ENCODE measurements at regions of chr10 and their contacts with region 1.

Region 1: GRCh38 chr10:101569838-101570766 is 18.0 kb downstream of the POLL start:
- DNase-seq: peak; percentile 61
- H3K4me3 ChIP-seq: peak overlapping the region; percentile 56 to 80 (median 72)
- H3K27ac ChIP-seq: no peak overlapping the region
- H3K4me1 ChIP-seq: peaks cover 19% of the 10 kb centered on the region
- H3K27me3 ChIP-seq: no peaks in the 10 kb centered on the region
- CTCF ChIP-seq: peak; percentile 24 to 75

Region 2: DNA sequence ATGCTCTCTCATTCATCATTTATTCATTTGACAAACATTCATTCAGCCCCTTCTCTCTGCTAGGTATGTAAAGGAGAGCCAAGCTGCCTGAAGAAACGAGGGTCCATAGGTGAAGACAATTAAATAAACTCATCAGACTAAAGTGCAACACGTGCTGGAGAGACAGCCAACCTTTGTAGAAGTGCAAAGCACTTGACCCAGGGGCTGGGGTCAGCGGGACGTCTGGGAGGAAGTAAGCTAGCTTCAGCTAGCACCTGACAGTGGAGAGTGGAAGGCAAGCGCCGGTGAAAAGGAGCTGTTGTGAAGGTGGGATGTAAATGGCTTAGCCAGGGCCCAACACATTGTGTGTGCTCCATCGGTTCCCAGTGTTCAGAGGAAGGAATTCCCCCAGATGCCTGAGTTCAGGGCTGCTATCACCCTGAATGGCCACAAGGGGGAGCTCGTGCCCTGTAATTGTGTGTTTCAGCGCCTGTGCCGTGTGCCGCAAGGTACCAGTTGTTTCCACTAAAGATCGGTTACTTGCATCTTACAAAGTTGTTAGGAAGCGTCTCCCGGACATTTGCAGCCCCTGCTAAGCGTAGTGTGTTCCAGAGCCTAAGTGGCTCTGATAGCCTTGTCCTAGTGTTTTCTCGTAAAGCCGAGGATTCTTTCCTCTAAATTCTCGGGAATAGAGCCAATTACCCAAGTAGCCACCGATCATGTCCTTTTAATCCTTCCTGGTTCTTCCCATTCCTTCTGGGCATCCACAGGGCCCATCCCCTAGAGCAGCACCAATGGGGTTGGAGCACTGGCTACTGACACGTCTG is 408.4 kb before region 1 on chr10:
- CTCF ChIA-PET with region 1: interaction called, 3 read pairs
- dilution Hi-C with region 1: no loop called
- in situ Hi-C with region 1: no loop called
- intact Hi-C with region 1: loop called (anchors 1 kb)
- DNase-seq: peak; percentile 71
- H3K4me3 ChIP-seq: peak overlapping the region in 2 of 3 experiments; percentile 16 to 29
- H3K27ac ChIP-seq: no peak overlapping the region
- H3K4me1 ChIP-seq: peaks cover 9% of the 10 kb centered on the region
- H3K27me3 ChIP-seq: no peaks in the 10 kb centered on the region
- CTCF ChIP-seq: peak; percentile 96 to 98

Region 3: GRCh38 chr10:101305320-101306241 is 264.5 kb before region 1 on chr10:
- CTCF ChIA-PET with region 1: interaction called, 19 read pairs
- dilution Hi-C with region 1: no loop called
- in situ Hi-C with region 1: loop called (anchors 5 kb)
- intact Hi-C with region 1: loop called (anchors 1 kb)
- DNase-seq: no peak
- H3K4me3 ChIP-seq: no peak overlapping the region
- H3K27ac ChIP-seq: no peak overlapping the region
- H3K4me1 ChIP-seq: peaks cover 16% of the 10 kb centered on the region
- H3K27me3 ChIP-seq: no peaks in the 10 kb centered on the region
- CTCF ChIP-seq: no peak

Region 4: GRCh38 chr10:101467286-101467770 is 102.8 kb before region 1 on chr10:
- CTCF ChIA-PET with region 1: interaction called, 6 read pairs
- dilution Hi-C with region 1: no loop called
- in situ Hi-C with region 1: no loop called
- intact Hi-C with region 1: loop called (anchors 1 kb)
- DNase-seq: peak; percentile 73
- H3K4me3 ChIP-seq: peak overlapping the region in 1 of 3 experiments; percentile 11
- H3K27ac ChIP-seq: no peak overlapping the region
- H3K4me1 ChIP-seq: no peaks in the 10 kb centered on the region
- H3K27me3 ChIP-seq: no peaks in the 10 kb centered on the region
- CTCF ChIP-seq: peak; percentile 90 to 98

Region 5: DNA sequence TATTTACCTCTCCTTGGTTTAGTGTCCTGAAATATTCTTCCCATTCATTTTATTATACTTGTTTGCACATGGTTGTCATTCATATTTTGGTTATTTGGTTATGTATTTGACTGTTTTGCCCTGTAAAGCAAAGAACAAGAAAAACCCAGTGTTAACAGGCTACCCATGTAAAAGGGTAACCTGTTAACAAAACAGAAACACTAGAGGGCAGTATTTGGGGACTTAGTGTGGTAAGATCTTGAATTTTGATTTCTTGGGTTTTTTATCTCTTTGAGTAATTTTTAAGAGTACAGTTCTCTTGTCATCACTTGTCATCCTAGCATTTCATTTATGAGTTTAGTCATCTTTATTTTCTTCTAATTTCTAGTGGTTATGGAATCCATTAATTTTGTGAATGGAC is 33.3 kb before region 1 on chr10:
- CTCF ChIA-PET with region 1: no interaction called
- dilution Hi-C with region 1: no loop called
- in situ Hi-C with region 1: no loop called
- intact Hi-C with region 1: loop called (anchors 1 kb)
- DNase-seq: peak; percentile 18
- H3K4me3 ChIP-seq: no peak overlapping the region
- H3K27ac ChIP-seq: no peak overlapping the region
- H3K4me1 ChIP-seq: no peaks in the 10 kb centered on the region
- H3K27me3 ChIP-seq: no peaks in the 10 kb centered on the region
- CTCF ChIP-seq: peak; percentile 64 to 70

Region 6: GRCh38 chr10:102024799-102025198 is 454.7 kb after region 1 on chr10:
- CTCF ChIA-PET with region 1: no interaction called
- dilution Hi-C with region 1: no loop called
- in situ Hi-C with region 1: no loop called
- intact Hi-C with region 1: no loop called
- DNase-seq: no peak
- H3K4me3 ChIP-seq: no peak overlapping the region
- H3K27ac ChIP-seq: no peak overlapping the region
- H3K4me1 ChIP-seq: no peaks in the 10 kb centered on the region
- H3K27me3 ChIP-seq: no peaks in the 10 kb centered on the region
- CTCF ChIP-seq: no peak

Measured in mammary epithelial cell (primary cell).